ENCODE measurements at regions of chr22 and their contacts with region 1.

Region 1: GRCh38 chr22:50620593-50621355 is 7.2 kb downstream of the ARSA start:
- DNase-seq: peak; percentile 85
- CTCF ChIP-seq: peak; percentile 77

Region 2: GRCh38 chr22:50250555-50251476 is 370.0 kb before region 1 on chr22 and contains the start of gene HDAC10:
- CTCF ChIA-PET with region 1: interaction called, 17 read pairs
- POLR2A ChIA-PET with region 1: no interaction called
- DNase-seq: peak; percentile 93
- CTCF ChIP-seq: no peak

Region 3: GRCh38 chr22:50399751-50400331 is 220.9 kb before region 1 on chr22:
- CTCF ChIA-PET with region 1: interaction called, 13 read pairs
- POLR2A ChIA-PET with region 1: no interaction called
- DNase-seq: peak; percentile 56
- CTCF ChIP-seq: peak; percentile 63

Region 4: DNA sequence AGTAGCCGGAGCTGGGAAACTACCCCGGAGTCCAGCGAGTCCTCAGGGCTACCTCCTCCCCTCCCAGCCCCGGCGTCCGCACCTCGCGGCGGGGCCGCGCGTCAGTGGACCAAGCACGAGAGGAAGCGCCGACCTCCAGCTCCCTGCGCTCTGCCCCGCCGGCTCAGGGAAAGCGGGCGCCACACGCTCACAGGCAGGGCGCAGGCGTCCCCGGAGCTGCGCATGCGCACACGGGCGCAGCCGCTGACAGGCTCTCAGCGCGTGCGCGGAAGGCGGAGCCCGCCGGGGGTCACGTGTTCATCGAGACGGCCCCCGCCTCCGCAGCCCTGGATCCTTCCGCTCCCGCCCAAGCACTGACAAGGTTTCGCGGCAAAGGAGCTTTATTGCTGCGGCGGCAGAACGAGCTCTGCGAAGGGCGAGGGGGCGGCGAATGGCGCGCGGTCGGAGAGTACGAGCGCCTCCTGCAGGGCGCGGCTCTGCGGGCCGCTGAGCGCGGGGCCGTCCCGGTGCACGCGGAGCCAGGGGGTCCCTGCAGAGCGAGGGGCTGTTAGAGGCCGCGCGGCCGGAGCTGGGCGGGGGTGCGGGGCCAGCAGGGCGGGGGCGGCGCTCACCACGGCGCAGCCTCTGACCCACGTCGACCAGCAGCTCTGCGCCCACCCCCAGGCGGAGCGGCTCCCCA is 95.2 kb before region 1 on chr22 and contains the start of gene SCO2:
- CTCF ChIA-PET with region 1: interaction called, 22 read pairs
- POLR2A ChIA-PET with region 1: no interaction called
- DNase-seq: peak; percentile 97
- CTCF ChIP-seq: peak; percentile 64

Region 5: GRCh38 chr22:50562523-50563412 is 58.0 kb before region 1 on chr22 and contains the start of gene SYCE3:
- CTCF ChIA-PET with region 1: interaction called, 13 read pairs
- POLR2A ChIA-PET with region 1: no interaction called
- DNase-seq: peak; percentile 98
- CTCF ChIP-seq: peak; percentile 85

Measured in GM10248 (cell line).